ENCODE measurements at regions of chr3 and their contacts with region 1.

Region 1: GRCh38 chr3:52934630-52935530 is 37.5 kb upstream of the STIMATE start:
- DNase-seq: peak in 1 of 2 donors; percentile 35
- ATAC-seq: peak in 6 of 8 donors; percentile 69 to 81 (median 75)
- H3K4me3 ChIP-seq: no peak overlapping the region
- H3K27ac ChIP-seq: no peak overlapping the region
- H3K4me1 ChIP-seq: peaks cover 0 to 11% (median 0%) of the 10 kb centered on the region in 9 donors
- H3K27me3 ChIP-seq: no peaks in the 10 kb centered on the region
- CTCF ChIP-seq: peak; percentile 40 to 84 (median 74)

Region 2: DNA sequence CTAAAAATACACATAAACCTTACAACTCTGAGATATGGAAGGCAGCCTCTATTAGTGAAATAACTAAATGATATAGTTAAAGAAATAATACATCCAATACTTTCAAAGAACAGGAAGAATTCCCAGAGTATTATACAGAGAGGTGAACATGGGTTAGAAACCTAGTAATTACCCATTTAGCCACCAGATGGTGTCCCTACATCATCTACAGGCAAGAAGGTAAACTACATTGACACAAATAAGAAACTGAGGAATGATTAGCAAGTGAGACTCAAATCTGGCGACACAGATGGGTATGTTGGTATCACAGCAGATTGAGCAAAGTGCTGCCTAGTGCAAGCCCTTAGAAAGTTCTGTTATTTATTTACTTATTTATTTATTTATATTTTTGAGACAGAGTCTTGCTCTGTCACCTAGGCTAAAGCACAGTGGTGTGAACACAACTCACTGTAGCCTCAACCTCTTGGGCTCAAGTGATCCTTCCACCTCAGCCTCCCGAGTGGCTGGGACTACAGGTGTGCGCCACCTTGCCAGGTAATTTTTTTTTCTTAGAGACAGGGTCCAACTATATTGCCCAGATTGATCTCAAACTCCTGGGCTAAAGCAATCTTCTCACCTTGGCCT is 192.3 kb before region 1 on chr3:
- intact Hi-C with region 1: loop called in 6 of 10 experiments (anchors 1 to 10 kb)
- DNase-seq: no peak
- ATAC-seq: peak in 1 of 8 donors; percentile 42
- H3K4me3 ChIP-seq: no peak overlapping the region
- H3K27ac ChIP-seq: no peak overlapping the region
- H3K4me1 ChIP-seq: no peaks in the 10 kb centered on the region
- H3K27me3 ChIP-seq: no peaks in the 10 kb centered on the region
- CTCF ChIP-seq: peak; percentile 35 to 71 (median 60)

Region 3: DNA sequence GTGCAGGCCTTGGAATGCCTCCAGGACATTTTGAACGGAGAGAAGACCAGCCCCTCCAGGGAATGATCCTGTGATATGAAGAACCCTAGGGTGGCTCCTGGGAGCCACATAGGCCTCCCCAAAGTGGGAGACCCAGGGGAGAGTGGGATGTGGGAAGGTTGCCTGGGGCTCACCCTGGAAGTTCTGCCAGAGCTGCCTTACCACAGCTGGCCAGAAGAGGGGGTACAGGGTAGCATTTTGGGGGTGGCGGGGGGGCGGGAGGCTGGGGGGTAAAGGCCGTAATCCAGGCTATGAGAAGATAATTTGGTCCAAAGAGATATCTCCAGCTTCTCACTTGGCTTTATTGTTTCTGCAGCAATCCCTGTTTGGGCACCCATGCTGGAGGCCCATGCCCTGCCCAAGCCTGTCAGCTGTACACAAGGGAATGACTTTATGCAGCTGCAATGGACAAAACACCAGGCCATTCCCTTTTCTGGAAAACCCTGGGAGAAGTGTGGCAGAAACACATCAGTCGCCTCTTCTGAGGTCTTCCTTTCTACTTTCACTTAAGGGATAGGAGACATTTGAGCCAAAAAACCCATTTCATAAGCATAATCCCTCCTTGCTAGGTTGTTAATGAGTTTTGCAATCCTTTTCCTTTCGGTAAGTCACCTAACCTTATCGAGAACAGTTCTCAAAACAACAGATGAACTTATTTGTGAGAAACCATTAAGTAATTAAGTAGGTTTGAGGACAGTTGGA is 89.0 kb before region 1 on chr3:
- intact Hi-C with region 1: loop called in 3 of 10 experiments (anchors 1 to 5 kb)
- DNase-seq: peak in 1 of 2 donors; percentile 41
- ATAC-seq: peak in 5 of 8 donors; percentile 11 to 53 (median 25)
- H3K4me3 ChIP-seq: peak overlapping the region in 4 of 10 donors; percentile 7 to 15 (median 12)
- H3K27ac ChIP-seq: peak overlapping the region; percentile 48 to 84 (median 73)
- H3K4me1 ChIP-seq: peaks cover 22 to 64% (median 47%) of the 10 kb centered on the region in 9 donors
- H3K27me3 ChIP-seq: no peaks in the 10 kb centered on the region
- CTCF ChIP-seq: peak; percentile 6 to 61 (median 51)

Region 4: GRCh38 chr3:52851348-52851747 is 83.5 kb before region 1 on chr3:
- intact Hi-C with region 1: loop called in 3 of 10 experiments (anchors 1 to 5 kb)
- DNase-seq: no peak
- ATAC-seq: peak in 6 of 8 donors; percentile 42 to 69 (median 50)
- H3K4me3 ChIP-seq: no peak overlapping the region
- H3K27ac ChIP-seq: no peak overlapping the region
- H3K4me1 ChIP-seq: peaks cover 0 to 9% (median 4%) of the 10 kb centered on the region in 9 donors
- H3K27me3 ChIP-seq: no peaks in the 10 kb centered on the region
- CTCF ChIP-seq: peak in 8 of 9 donors; percentile 10 to 63 (median 50)

Region 5: DNA sequence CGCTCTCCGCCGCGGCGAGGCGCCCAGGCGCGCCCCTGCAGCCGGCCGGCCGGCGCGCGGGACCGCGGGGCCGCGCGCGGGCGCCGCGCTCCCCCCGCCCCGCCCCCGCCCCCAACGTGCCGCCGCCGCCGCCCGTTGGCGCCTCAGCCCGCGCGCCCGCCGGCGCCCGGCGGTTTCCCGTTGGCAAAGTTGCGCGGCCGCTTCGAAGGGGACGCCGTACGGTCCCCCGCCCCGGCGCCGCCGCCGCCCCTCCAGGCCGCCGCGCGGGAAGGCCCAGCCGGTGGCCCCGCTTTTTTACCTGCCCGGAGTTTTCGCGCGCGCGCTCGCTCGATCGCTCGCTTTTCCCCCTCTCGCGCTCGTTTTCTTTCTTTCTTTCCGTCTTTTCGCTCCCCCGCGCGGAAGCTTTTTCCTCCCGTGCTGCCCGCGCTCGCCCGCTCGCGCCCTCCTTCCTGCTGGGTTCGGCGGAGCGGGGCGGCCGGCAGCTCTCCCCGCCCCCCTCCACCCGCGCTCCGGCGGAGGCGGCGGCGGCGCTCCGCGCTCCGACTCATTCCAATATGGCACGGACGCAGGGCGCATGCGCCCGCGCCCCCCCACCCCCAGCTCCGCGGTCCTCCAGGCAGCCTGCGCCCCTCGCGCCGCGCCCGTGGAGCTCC is 110.8 kb after region 1 on chr3 and contains the start of gene SFMBT1:
- intact Hi-C with region 1: loop called in 2 of 10 experiments (anchors 10 kb)
- DNase-seq: peak; percentile 52 to 76
- ATAC-seq: peak; percentile 68 to 84 (median 74)
- H3K4me3 ChIP-seq: peak within 1 kb of the TSS; percentile 61 to 98 (median 92)
- H3K27ac ChIP-seq: peak within 1 kb of the TSS; percentile 70 to 94 (median 90)
- H3K4me1 ChIP-seq: peaks cover 8 to 39% (median 24%) of the 10 kb centered on the region in 9 donors
- H3K27me3 ChIP-seq: peaks cover 0 to 12% (median 0%) of the 10 kb centered on the region in 7 donors
- CTCF ChIP-seq: no peak
- total RNA-seq, gene SFMBT1: 14.5 to 19.1 (median 17.1) TPM